Right ventricle myocardium inferior (tissue), 1 donor: ENCODE measurements at regions of chr1 and their contacts with region 1.

Region 1: DNA sequence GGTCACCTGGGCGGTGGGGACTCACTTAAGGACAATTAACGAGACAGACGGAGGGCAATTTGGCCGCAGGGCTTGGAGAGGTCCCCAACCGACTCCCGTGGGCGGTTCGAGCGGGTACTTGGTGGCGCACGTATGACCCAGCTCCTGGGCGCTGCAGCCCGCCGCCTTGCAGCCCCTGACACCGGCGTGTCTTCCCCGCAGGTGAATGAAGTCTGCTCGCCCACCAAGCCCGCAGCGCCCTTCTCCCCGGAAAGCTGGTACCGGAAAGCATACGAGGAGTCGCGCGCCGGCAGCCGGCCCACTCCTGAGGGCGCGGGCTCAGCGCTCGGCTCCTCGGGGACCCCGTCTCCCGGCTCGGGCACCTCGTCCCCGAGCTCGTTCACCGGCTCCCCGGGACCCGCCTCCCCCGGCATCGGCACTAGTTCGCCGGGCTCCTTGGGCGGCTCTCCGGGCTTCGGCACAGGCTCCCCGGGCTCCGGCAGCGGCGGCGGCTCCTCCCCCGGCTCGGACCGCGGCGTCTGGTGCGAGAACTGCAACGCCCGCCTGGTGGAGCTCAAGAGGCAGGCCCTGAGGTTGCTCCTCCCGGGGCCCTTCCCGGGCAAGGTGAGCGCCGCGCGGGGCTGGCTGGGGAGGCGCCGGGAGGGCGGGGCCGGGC is 1.4 kb downstream of the KIF26B start:
- DNase-seq: peak; percentile 88
- ATAC-seq: peak; percentile 88

Region 2: DNA sequence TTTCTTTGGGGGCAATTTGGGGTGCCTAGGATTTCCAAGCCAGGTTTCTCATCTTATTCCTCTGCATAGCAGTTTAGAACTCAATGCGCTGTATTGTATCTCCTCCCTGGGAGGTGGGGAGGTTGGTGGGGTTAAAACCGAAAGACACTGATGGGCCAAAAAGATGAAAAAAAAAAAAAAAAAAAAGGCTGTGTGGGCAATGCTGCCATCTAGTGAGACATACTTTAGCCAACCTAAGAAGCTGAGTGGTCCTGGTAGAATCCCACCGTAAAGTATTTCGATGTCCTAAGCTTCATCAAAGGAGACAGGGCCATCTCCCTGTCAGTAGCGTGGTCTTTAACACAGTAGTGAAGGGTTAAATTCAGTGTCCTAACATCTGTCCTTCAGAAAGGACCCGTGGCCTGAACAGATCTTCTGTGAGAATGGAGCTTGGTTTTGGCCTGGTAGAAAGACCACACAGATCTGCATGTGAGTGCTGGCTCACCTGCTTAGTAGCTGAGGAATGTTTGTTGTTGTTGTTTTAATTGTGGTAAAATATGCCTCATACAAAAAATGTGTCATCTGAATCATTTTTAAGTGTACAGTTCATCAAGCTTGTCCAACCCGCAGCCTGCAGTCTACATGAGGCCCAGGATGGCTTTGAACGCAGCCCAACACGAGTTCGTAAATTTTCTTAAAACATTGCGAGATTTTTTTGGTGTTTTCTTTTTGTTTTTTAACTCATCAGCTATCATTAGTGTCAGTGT is 224.8 kb after region 1 on chr1:
- intact Hi-C with region 1: loop called (anchors 2 kb)
- DNase-seq: no peak
- ATAC-seq: no peak

Region 3: DNA sequence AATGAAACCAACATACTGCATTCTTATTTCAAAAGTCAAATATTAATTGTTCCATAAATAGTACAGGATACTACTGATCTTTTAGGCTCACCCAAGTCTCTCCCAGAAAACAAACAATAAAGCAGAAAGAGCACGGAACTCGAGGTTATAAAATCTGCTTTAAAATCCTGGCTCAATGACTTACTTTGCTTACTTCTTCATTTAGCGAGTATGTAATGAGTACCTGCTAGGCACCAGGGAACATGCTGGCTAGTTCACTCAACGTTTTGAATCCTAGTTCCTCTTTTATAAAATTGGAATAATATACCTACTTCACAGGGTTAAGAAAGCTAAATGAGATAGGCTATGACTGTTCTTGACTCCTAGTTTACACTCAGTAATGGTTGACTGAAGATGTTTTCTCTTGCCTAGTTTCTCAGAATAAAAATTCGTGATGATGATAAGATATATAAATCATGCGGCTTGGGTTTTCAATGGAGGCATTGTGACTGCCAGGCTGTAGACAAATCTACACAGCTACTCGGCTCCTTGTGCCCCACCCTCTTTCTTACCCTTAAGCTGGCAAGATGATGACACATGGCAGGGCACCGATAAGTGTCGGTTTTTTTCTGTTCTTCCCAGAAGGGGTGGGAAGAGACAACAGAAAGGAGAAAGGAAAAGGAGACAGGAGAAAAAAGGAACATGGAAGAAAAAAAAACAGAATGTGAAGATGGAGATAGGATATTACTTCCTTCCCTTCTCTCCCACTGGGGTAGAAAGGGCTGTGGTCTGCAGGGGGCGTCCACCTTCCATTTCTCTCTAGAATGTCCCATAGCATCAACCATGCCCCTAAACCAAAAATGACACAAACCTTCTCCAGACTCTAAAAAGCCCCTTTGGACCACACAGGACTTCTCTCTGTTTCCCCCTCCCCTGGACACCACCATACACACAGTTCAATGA is 843.8 kb after region 1 on chr1:
- intact Hi-C with region 1: loop called (anchors 1 kb)
- DNase-seq: no peak
- ATAC-seq: no peak

Region 4: GRCh38 chr1:246280551-246280950 is 1124.3 kb after region 1 on chr1:
- intact Hi-C with region 1: loop called (anchors 5 kb)
- DNase-seq: no peak
- ATAC-seq: no peak

Region 5: GRCh38 chr1:246497331-246497915 is 1341.2 kb after region 1 on chr1:
- intact Hi-C with region 1: loop called (anchors 2 kb)
- DNase-seq: no peak
- ATAC-seq: no peak